Posterior vena cava (tissue), 2 donors: ENCODE measurements at regions of chr6 and their contacts with region 1.

Region 1: GRCh38 chr6:111291336-111292259 is 191.4 kb downstream of the REV3L start:
- DNase-seq: no peak

Region 2: GRCh38 chr6:111306104-111306888 is 14.7 kb after region 1 on chr6:
- intact Hi-C with region 1: loop called in 1 of 2 experiments (anchors 1 kb)
- DNase-seq: no peak

Region 3: GRCh38 chr6:112117554-112117953 is 826.0 kb after region 1 on chr6:
- intact Hi-C with region 1: no loop called
- DNase-seq: no peak